CD8-positive, alpha-beta T cell (primary cell): ENCODE measurements at regions of chr11 and their contacts with region 1.

Region 1: GRCh38 chr11:33039274-33040032 is at the start of gene TCP11L1:
- DNase-seq: peak; percentile 60 to 89 (median 83)
- ATAC-seq: peak; percentile 81
- H3K4me3 ChIP-seq: peak within 1 kb of the TSS; percentile 98
- H3K4me3 Mint-ChIP-seq: peak within 1 kb of the TSS; percentile 95
- H3K27ac ChIP-seq: peak within 1 kb of the TSS; percentile 71 to 86
- H3K27ac Mint-ChIP-seq: peak within 1 kb of the TSS; percentile 91
- H3K4me1 ChIP-seq: peaks cover 10% of the 10 kb centered on the region
- H3K4me1 Mint-ChIP-seq: peaks cover 20% of the 10 kb centered on the region
- H3K27me3 ChIP-seq: no peaks in the 10 kb centered on the region
- H3K27me3 Mint-ChIP-seq: no peaks in the 10 kb centered on the region
- CTCF ChIP-seq: no peak
- total RNA-seq, gene TCP11L1: 10.9 to 12.3 TPM

Region 2: GRCh38 chr11:32583459-32584271 is 455.8 kb before region 1 on chr11 and contains the start of gene EIF3M:
- CTCF ChIA-PET with region 1: no interaction called
- POLR2A ChIA-PET with region 1: no interaction called
- intact Hi-C with region 1: loop called in 1 of 2 experiments (anchors 10 kb)
- DNase-seq: peak; percentile 91 to 98 (median 95)
- ATAC-seq: peak; percentile 98
- H3K4me3 ChIP-seq: peak within 1 kb of the TSS; percentile 80 to 93
- H3K4me3 Mint-ChIP-seq: peak within 1 kb of the TSS; percentile 99
- H3K27ac ChIP-seq: peak within 1 kb of the TSS; percentile 81 to 86
- H3K27ac Mint-ChIP-seq: peak within 1 kb of the TSS; percentile 99
- H3K4me1 ChIP-seq: peaks cover 29% of the 10 kb centered on the region
- H3K4me1 Mint-ChIP-seq: peaks cover 39% of the 10 kb centered on the region
- H3K27me3 ChIP-seq: no peaks in the 10 kb centered on the region
- H3K27me3 Mint-ChIP-seq: no peaks in the 10 kb centered on the region
- CTCF ChIP-seq: no peak
- total RNA-seq, gene EIF3M: 269 to 274 TPM

Region 3: DNA sequence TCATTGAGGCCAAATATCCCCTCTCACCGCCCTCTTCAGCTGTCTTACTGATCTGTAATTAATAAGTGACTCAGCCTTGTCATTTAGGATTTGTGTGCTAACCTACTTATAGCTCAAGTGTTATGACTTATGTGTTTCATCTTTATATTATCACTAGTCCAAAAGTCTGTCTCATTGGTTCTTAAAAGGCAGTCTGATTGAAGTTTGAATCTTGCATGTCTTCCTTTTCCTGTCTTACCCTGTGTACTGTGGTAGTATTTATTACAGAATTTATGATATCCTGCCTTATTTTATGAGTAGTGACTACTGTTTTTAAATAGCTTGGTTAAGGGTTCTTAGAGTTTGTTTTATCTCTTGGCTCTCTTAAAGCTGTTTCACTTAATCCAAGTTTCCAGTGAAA is 17.5 kb before region 1 on chr11:
- CTCF ChIA-PET with region 1: interaction called, 8 read pairs
- POLR2A ChIA-PET with region 1: interaction called, 23 read pairs
- intact Hi-C with region 1: loop called in 1 of 2 experiments (anchors 2 kb)
- DNase-seq: no peak
- ATAC-seq: peak; percentile 38
- H3K4me3 ChIP-seq: no peak overlapping the region
- H3K4me3 Mint-ChIP-seq: no peak overlapping the region
- H3K27ac ChIP-seq: no peak overlapping the region
- H3K27ac Mint-ChIP-seq: no peak overlapping the region
- H3K4me1 ChIP-seq: peaks cover 13% of the 10 kb centered on the region
- H3K4me1 Mint-ChIP-seq: peaks cover 27% of the 10 kb centered on the region
- H3K27me3 ChIP-seq: peaks cover 0 to 2% of the 10 kb centered on the region in 2 experiments
- H3K27me3 Mint-ChIP-seq: peaks cover 7% of the 10 kb centered on the region
- CTCF ChIP-seq: no peak

Region 4: DNA sequence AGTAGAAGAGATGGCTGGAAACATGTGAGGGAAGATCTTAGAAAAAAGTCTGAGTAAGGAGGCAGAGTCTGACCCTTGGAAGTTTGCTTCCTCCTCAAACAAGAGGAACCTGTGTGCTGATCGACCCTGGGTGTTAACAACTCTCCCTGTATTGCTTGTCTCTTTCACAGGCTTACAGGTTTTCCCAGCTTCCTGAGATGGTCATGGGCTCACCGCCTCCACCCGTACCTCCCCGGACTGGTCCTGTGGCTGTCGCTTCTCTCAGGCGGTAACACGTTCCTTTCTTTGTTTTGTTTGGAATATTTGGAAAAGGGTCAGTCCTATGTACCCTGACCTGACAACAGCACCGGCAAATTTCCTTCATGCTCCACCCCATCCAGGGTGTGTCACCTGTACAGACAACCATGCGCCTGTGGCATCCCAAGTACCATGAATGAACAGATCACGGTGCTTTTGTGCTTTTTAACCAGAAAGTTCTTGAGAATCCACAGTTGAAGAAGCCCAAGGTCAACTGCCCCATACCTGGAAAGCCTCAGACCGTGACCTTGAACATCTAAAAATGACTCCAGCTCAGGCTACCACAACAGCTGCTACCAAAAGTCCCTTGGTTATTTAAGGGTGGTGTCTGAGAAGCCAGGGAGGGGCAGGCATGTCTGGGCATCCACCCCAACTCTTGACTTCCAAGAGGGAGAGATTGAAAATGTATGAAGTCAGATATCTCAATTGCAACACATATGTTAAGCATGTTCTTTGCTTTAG is 616.6 kb after region 1 on chr11:
- CTCF ChIA-PET with region 1: no interaction called
- POLR2A ChIA-PET with region 1: no interaction called
- intact Hi-C with region 1: no loop called
- DNase-seq: no peak
- ATAC-seq: no peak
- H3K4me3 ChIP-seq: no peak overlapping the region
- H3K4me3 Mint-ChIP-seq: no peak overlapping the region
- H3K27ac ChIP-seq: no peak overlapping the region
- H3K27ac Mint-ChIP-seq: no peak overlapping the region
- H3K4me1 ChIP-seq: no peaks in the 10 kb centered on the region
- H3K4me1 Mint-ChIP-seq: no peaks in the 10 kb centered on the region
- H3K27me3 ChIP-seq: no peaks in the 10 kb centered on the region
- H3K27me3 Mint-ChIP-seq: peaks cover 22% of the 10 kb centered on the region
- CTCF ChIP-seq: no peak